Left lung (tissue), 14 donors: ENCODE measurements at regions of chr3 and their contacts with region 1.

Region 1: GRCh38 chr3:124032648-124033359 is 40.9 kb upstream of the ROPN1 start:
- DNase-seq: peak; percentile 80 to 93 (median 88)
- ATAC-seq: peak; percentile 98
- H3K4me3 ChIP-seq: peak overlapping the region; percentile 57 to 60
- H3K27ac ChIP-seq: peak overlapping the region; percentile 59 to 73
- H3K4me1 ChIP-seq: peaks cover 0 to 19% of the 10 kb centered on the region in 2 donors
- H3K27me3 ChIP-seq: peaks cover 11 to 91% of the 10 kb centered on the region in 2 donors
- CTCF ChIP-seq: peak; percentile 71 to 80

Region 2: DNA sequence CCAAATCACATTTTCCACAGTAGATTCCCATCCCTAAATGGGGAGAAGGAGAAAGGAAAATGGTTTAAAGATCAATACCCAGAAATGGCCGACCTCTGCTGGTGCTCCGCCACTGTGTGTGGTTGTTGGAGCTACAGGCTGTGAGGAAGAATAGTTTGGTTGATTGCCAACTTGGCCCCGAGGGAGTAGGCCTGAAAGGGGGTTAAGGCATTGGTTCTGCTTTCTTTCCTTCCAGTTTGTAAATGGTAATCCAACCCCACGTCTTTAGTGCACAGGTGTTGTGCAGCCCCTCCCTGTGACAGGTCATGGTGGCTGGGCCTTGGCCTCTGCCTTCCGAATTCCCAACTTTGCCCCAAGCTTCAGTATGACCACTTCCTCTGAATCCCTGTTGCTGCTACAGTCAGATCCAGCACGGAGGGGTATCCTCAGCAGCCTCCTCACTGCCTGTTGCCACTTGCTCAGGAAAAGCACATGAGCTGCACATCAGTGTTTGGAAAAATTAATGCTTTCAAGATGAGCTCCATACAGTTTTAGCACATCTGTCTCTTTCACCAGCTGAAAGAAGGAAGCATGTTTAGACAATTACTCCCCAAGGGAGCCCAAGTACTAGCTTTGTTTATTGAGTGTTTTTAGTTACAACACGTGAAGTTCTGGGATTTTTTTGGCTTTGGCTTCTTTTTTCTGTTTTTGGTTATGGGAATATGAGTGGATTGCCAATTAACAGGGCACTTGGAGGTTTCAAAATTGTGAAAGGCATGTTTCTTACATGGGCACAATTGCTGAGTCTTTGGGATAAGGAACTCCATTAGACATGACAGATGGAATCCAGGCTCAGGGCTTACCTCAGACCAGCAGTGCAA is 51.4 kb after region 1 on chr3:
- intact Hi-C with region 1: loop called in 1 of 2 experiments (anchors 10 kb)
- DNase-seq: no peak
- ATAC-seq: no peak
- H3K4me3 ChIP-seq: no peak overlapping the region
- H3K27ac ChIP-seq: no peak overlapping the region
- H3K4me1 ChIP-seq: no peaks in the 10 kb centered on the region
- H3K27me3 ChIP-seq: no peaks in the 10 kb centered on the region
- CTCF ChIP-seq: no peak

Region 3: GRCh38 chr3:124260206-124260915 is 227.6 kb after region 1 on chr3:
- intact Hi-C with region 1: no loop called
- DNase-seq: peak in 1 of 4 donors; percentile 72
- ATAC-seq: peak; percentile 92
- H3K4me3 ChIP-seq: no peak overlapping the region
- H3K27ac ChIP-seq: peak overlapping the region; percentile 28 to 46
- H3K4me1 ChIP-seq: peaks cover 4 to 11% of the 10 kb centered on the region in 2 donors
- H3K27me3 ChIP-seq: no peaks in the 10 kb centered on the region
- CTCF ChIP-seq: no peak

Region 4: DNA sequence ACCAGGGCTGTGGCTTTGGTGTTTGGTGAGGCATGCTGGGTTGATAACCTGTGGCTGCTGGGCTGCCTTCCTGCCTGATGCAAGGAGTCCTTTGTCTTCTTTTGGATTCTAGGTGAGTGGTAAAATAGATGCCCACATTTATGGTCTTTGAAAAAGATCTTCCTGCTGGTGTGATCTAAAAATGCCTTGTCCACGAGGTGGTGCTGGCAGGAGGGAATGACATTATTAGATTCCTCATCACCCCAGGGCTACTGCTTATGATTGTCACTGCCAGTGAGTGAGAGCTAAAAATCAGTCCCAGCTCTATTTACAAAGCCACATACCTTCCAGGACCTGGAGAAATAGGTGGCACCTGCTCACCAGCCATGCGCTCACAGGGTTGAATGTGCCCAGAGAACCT is 314.6 kb after region 1 on chr3:
- intact Hi-C with region 1: no loop called
- DNase-seq: no peak
- ATAC-seq: no peak
- H3K4me3 ChIP-seq: no peak overlapping the region
- H3K27ac ChIP-seq: no peak overlapping the region
- H3K4me1 ChIP-seq: peaks cover 0 to 8% of the 10 kb centered on the region in 2 donors
- H3K27me3 ChIP-seq: no peaks in the 10 kb centered on the region
- CTCF ChIP-seq: no peak

Region 5: DNA sequence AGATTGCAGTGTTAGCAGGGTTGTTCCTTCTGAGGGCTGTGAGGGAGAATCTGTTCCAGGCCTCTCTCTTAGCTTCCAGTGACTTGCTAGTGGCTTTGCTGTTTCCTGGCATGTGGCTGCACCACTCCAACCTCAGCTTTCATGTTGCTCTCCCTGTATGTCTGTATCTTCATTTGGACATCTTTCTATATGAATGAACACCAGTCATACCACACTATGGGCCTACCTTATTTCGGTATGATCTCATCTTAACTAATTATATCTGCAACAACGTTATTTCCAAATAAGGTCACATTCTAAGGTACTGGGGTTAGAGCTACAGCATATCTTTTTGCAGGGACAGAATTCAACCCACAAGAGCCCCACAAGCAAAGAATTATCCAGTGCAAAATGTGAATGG is 340.7 kb after region 1 on chr3:
- intact Hi-C with region 1: no loop called
- DNase-seq: no peak
- ATAC-seq: no peak
- H3K4me3 ChIP-seq: no peak overlapping the region
- H3K27ac ChIP-seq: no peak overlapping the region
- H3K4me1 ChIP-seq: no peaks in the 10 kb centered on the region
- H3K27me3 ChIP-seq: no peaks in the 10 kb centered on the region
- CTCF ChIP-seq: no peak